GM13977 (cell line): ENCODE measurements at regions of chr6 and their contacts with region 1.

Region 1: DNA sequence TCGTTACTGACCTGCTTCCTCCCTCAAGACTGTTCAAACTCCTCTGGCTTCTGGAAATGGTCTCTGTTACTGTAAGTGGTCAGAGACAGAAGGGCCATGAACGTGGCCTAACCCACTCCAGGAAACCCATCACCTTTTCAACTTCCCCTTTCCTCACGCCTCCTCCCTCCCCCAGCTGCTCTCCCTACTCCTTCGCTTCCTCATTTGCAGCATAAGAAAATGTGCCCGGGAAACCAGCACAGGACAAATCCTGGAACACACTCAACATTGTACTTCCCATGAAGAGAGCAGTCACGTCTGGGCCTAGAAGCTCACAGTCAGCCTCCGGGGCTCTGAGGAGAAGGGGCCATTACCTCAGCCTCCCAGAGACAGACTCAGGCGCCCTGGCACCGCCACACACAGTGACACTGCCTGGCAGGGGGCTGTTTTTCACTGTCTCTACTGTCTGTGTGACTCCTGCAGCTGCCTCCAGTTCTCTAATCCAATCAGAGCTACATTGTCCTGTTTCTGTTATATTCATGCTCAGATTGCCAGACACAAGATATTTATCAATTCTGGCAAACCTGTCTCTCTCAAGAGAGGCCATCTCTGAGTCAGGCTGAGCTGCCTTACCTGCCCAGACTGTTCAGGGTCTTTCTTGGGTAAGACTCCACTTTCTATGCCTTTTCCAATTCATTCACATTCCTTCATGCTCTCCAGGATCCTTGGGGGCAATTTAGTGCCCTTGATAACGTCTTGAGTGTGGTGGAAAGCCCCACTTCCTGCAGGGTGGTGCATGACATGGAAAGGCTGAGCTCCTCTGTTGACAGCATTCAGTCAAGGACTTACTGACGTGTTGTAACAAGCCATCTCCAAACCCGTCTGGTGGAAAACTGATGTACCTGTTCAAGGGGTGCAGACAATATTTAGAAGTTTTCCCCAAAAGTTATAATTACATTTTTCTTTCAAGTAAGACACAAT is 242.2 kb downstream of the HIVEP2 start:
- DNase-seq: peak; percentile 15
- CTCF ChIP-seq: no peak

Region 2: DNA sequence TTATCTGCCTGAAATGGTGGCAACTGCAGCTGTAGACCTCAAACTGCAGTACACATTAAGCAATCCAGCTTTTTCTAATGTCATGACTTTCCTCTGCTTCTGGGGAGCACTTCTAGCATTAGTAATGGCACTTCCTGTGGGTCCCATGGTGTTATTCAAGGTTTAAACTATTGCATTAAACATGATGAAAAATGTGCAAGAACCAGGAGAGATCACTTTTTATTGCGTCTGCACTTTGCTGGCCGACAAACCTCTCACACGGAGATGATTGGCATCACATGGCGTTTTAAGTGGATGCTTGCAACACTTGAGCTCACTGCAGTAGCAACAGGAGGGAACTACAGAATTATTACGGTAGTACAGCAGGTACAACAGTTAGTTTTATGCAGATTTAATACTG is 93.8 kb after region 1 on chr6:
- in situ Hi-C with region 1: no loop called
- DNase-seq: no peak
- CTCF ChIP-seq: no peak

Region 3: DNA sequence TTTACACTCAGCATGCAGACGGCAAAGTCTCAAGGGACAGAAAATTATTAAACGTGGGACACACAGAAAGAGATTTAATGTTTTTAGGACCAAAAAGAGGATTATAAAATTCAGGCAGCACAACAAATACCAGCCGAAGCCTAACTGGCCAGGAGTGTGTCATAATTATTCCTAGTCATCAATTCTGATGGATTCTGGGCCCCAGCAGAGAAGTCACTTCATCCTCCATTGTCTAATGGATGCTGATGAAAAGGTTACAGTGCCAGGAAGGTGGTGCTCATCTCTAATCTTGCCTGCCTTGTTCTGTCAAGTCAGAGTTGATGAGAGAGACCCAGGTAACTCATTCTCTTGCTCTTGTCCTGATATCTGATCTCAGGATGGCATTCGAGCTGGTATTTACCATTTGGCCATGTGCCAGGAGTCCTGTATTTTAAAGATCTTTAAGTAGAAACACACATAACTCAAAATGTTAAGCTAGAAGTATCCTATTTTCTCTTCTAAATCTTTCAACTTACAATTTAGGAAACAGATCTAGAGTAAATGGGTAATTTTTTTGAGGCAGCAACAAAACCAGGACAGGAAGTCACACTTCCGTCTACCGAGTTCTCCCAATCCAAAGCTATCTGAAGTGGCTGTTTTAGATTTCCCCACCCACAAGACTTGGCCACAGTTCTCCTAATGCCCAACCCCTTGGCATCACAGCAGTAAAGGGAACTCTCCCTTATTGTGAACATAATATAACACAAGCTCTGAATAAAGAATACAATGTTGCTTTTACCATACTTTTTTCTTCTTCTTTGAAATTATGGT is 697.7 kb after region 1 on chr6:
- in situ Hi-C with region 1: loop called (anchors 25 kb)
- DNase-seq: no peak
- CTCF ChIP-seq: no peak